AG04449 (cell line): ENCODE measurements at regions of chr18 and their contacts with region 1.

Region 1: GRCh38 chr18:63578357-63578958 is 8.7 kb upstream of the SERPINB13 start:
- DNase-seq: no peak
- H3K4me3 ChIP-seq: no peak overlapping the region
- CTCF ChIP-seq: peak; percentile 73

Region 2: DNA sequence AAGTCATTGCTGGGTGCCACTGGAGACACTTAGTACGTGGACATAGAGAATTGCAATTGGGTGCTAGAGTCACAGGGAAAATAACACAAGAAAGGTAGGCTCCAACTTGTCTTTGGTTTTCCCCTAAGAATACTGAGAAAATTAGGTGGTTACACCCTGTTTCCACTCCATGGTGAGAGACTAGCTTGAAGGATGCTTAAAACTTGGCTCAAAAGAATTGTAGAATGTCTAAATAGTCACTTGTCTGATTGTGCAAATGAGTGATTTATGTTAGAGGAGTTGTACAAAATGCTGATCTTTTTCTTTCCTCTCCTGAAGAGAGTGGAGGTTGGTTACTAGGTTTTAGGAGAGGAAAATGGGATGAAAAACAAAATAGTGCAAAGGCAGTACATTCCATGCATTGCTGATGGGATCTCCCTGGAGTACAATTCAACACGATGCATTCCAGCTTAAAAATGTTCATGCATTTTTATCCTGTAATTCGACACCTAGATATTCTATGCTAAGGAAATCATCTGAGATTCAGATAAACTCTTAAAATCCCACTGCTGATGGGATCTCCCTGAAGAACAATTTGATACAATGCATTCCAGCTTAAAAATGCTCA is 38.5 kb before region 1 on chr18:
- CTCF ChIA-PET with region 1: interaction called, 24 read pairs
- POLR2A ChIA-PET with region 1: no interaction called
- DNase-seq: peak; percentile 59
- H3K4me3 ChIP-seq: no peak overlapping the region
- CTCF ChIP-seq: no peak

Region 3: DNA sequence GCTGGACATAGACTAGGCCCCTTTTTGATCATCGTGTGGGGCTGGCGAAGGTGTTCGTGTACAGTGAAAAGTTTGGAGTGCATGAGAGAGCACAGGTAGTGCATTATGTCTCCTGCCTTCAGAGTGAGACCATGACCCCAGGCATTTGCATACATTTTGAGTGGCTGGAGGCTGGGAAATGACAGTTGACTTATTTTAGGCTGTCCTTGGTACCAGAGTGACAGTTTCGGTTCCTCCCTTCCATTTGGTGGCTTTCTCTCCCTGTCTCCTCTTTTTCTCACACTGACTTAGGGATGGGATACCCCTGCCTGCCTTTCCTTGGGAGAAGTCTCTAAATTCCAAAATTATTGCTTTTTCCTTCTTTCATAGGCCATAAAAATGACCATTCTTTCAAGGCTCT is 16.2 kb before region 1 on chr18:
- CTCF ChIA-PET with region 1: interaction called, 121 read pairs
- POLR2A ChIA-PET with region 1: no interaction called
- DNase-seq: no peak
- H3K4me3 ChIP-seq: no peak overlapping the region
- CTCF ChIP-seq: no peak

Region 4: GRCh38 chr18:63681449-63682340 is 103.2 kb after region 1 on chr18:
- CTCF ChIA-PET with region 1: interaction called, 14 read pairs
- POLR2A ChIA-PET with region 1: no interaction called
- DNase-seq: no peak
- H3K4me3 ChIP-seq: no peak overlapping the region
- CTCF ChIP-seq: no peak

Region 5: GRCh38 chr18:63848159-63848558 is 269.7 kb after region 1 on chr18:
- CTCF ChIA-PET with region 1: interaction called, 170 read pairs
- POLR2A ChIA-PET with region 1: no interaction called
- DNase-seq: no peak
- H3K4me3 ChIP-seq: no peak overlapping the region
- CTCF ChIP-seq: peak; percentile 57